Dendritic cell treated with granulocyte-macrophage colony-stimulating factor and Interleukin-4, amounts not matched to agents 40 ng/mL and 50 ng/mL, for 4 days (primary cell): ENCODE measurements at regions of chr12 and their contacts with region 1.

Region 1: DNA sequence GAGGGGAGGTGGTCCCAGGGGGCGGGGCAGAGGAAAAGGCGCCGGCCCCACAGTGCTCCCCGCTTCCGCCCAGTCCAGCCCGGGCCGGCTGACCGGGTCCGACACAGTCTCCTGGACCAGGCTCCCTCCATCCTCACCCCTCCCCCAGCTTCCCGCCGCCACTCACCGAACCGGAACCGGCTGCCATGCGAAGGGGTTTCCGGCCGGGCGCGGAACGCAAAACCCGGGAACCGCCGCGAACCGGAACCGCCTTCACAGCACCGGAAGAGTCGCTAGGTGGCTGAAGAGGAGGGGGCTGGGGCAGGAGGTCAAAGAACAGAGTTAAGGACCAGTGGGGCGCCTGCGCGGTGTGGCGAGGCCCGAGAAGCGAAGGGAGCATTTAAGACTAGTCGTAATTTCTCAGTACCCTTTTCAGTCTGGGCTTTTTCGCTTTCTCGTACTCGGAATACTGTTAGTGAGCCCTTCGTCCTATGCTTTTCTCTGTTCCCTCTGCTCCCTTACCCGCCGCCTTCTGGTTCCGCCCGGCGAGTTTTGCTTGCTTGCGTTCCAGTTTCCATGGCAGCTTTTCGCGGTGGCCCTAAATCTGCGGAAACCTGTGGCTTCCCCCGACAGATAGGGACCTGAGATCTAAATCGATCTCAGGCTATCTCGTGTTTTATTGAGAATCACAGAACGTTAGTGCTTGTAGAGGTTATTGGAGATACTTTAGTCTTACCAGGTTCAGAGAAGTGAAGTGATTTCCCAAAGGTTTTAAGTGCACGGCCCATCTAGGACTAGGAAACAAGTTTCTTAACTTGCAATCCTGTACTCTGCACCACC is at the start of gene SENP1:
- H3K4me3 Mint-ChIP-seq: peak within 1 kb of the TSS; percentile 89
- H3K27ac Mint-ChIP-seq: peak within 1 kb of the TSS; percentile 98
- H3K4me1 Mint-ChIP-seq: peaks cover 25% of the 10 kb centered on the region
- H3K27me3 Mint-ChIP-seq: peaks cover 14% of the 10 kb centered on the region

Region 2: GRCh38 chr12:48084066-48084465 is 22.0 kb before region 1 on chr12:
- intact Hi-C with region 1: no loop called
- H3K4me3 Mint-ChIP-seq: no peak overlapping the region
- H3K27ac Mint-ChIP-seq: no peak overlapping the region
- H3K4me1 Mint-ChIP-seq: peaks cover 8% of the 10 kb centered on the region
- H3K27me3 Mint-ChIP-seq: no peaks in the 10 kb centered on the region

Region 3: GRCh38 chr12:48157018-48157888 is 51.2 kb after region 1 on chr12 and contains the start of gene ASB8:
- intact Hi-C with region 1: loop called (anchors 1 kb)
- H3K4me3 Mint-ChIP-seq: peak within 1 kb of the TSS; percentile 88
- H3K27ac Mint-ChIP-seq: peak within 1 kb of the TSS; percentile 91
- H3K4me1 Mint-ChIP-seq: peaks cover 6% of the 10 kb centered on the region
- H3K27me3 Mint-ChIP-seq: no peaks in the 10 kb centered on the region

Region 4: DNA sequence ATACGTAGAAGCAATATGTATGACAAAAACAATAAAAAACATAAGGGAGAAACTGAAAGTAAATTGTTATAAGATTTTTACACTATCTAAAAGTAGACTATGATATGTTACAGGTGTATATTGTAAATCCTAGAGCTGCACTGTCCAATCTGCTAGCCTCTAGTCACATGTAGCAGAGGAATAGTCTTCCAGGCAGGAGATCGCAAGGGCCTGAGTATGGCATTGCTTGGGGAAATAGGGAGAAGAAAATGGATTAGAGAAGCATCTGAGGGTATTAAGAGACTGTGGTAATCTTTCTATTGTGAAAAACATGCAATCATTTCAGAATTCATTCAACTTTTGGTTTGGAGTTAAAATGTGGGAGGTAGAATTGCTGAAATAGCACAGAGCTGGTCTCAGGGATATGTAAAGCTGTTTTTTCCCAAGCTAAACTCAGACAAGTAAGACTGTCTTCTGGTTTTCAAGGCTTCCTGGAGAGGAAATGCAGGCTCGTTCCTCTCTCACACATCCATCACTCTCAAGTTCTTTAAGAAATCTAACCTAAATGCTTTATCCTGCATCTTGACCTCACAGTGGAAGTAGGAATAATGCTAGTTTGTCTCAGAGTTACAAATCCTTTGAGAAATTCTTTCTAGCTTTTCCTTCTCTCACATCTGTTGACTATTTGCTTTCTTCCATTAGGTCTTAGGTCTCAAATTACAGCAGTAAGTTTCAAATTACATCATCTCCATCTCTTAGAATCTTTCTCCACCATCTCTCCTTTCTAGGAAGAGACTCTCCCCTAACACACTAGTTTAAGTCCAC is 69.7 kb after region 1 on chr12:
- intact Hi-C with region 1: no loop called
- H3K4me3 Mint-ChIP-seq: no peak overlapping the region
- H3K27ac Mint-ChIP-seq: no peak overlapping the region
- H3K4me1 Mint-ChIP-seq: peaks cover 6% of the 10 kb centered on the region
- H3K27me3 Mint-ChIP-seq: peaks cover 18% of the 10 kb centered on the region